Calu3 (cell line): ENCODE measurements at regions of chr16 and their contacts with region 1.

Region 1: DNA sequence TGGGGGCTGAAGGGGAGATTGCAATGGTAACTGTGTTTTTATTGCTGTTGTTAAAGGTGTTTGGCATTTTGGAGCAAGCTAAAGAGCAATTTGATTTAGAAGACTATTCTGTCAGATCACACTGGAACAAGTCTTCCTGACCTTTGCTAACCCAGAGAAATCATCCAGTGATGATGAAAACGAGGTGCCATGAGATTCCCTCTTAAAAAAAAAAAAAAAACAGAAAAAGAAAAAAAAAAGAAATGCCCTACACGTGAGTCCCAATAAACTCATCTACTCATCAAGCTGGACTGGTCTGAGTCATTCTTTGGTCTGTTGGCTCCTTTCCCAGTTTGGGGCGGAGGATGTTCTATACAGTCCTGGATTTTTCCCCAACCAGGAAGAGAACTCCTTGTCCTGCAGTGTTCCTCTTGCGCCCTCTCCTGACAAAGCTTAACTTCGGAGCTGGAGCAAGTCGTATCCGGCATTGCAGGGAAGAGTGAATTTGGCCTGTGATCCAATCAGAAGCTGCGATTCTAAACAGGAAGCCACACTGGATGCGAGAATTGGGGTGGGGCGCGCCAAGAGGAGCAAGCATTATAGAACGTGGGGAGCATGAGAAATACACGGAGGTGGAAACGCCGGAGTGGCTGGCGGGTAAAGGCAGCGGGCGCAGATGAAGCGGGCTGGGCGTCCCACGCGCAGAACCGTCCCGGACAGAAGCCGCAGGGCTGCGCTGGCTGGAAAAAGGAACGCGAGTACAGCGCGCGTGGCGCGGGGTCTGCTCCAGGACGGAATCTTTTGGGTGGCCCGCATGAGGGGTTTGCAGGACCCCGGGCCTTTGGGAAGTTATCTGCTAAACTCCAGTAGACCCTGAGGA is 22.4 kb upstream of the CRYM start:
- DNase-seq: peak; percentile 98
- H3K4me3 Mint-ChIP-seq: peak overlapping the region; percentile 95
- H3K27ac Mint-ChIP-seq: peak overlapping the region; percentile 89
- H3K4me1 Mint-ChIP-seq: peaks cover 21% of the 10 kb centered on the region
- H3K27me3 Mint-ChIP-seq: no peaks in the 10 kb centered on the region
- CTCF ChIP-seq: peak; percentile 74

Region 2: GRCh38 chr16:20806168-20807050 is 494.1 kb before region 1 on chr16 and contains the starts of genes ERI2 and REXO5:
- CTCF ChIA-PET with region 1: interaction called, 11 read pairs
- intact Hi-C with region 1: loop called (anchors 10 kb)
- DNase-seq: peak; percentile 94
- H3K4me3 Mint-ChIP-seq: peak within 1 kb of the TSS; percentile 84
- H3K27ac Mint-ChIP-seq: peak within 1 kb of the TSS; percentile 72
- H3K4me1 Mint-ChIP-seq: peaks cover 18% of the 10 kb centered on the region
- H3K27me3 Mint-ChIP-seq: no peaks in the 10 kb centered on the region
- CTCF ChIP-seq: peak; percentile 56
- total RNA-seq, gene ERI2: 28.7 and 32.6 TPM in 2 replicates
- total RNA-seq, gene REXO5: 10.1 and 10.4 TPM in 2 replicates

Region 3: DNA sequence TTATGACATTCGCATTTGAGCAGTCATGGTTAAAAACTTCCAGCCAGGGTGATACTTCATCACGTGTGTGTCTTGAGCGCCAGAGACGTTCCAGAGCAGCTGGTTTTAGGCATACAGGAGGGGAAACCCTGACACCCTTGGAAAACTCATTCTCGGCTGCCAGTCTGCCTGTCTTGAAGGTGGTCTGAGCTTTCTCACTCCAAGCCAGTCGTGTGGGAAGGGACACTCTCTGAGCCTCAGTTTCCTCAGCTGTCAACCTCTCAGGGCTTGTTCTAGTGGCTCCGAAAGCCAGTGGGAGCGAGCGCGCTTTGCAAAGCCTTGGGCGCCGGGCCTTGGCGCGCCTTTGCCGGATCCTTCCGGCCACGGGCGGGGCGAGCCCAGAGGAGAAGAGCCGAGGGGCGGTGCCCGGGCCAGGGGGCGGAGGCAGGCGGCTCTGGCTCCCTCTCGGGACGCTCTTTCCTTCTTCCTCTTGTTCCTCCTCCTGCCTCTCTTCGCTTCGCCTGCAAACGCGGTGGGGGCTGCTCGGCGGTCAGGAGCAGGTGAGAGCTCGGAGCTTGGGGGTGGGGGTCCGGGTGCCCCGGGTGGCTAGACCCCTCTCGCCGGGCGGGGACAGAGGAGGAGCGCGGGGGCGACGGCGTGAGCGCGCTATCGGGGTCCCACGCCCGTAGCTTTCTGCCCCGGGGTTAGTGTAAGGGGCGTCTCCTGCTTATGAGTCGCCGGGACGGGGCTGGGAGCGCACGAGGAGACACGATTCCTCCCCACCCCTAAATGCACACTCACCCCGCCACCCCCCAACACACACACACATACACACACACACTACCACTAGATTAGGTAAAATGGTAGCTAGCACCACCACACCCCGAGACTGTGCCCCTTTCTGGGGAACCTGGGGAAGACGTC is 142.1 kb before region 1 on chr16 and contains the start of gene LDAF1:
- CTCF ChIA-PET with region 1: interaction called, 83 read pairs
- intact Hi-C with region 1: loop called (anchors 1 kb)
- DNase-seq: peak; percentile 94
- H3K4me3 Mint-ChIP-seq: peak within 1 kb of the TSS; percentile 100
- H3K27ac Mint-ChIP-seq: peak within 1 kb of the TSS; percentile 87
- H3K4me1 Mint-ChIP-seq: peaks cover 42% of the 10 kb centered on the region
- H3K27me3 Mint-ChIP-seq: no peaks in the 10 kb centered on the region
- CTCF ChIP-seq: no peak
- total RNA-seq, gene LDAF1: 46.7 and 50.1 TPM in 2 replicates

Region 4: GRCh38 chr16:21190599-21190998 is 109.9 kb before region 1 on chr16:
- CTCF ChIA-PET with region 1: interaction called, 148 read pairs
- intact Hi-C with region 1: loop called (anchors 1 kb)
- DNase-seq: no peak
- H3K4me3 Mint-ChIP-seq: no peak overlapping the region
- H3K27ac Mint-ChIP-seq: no peak overlapping the region
- H3K4me1 Mint-ChIP-seq: peaks cover 8% of the 10 kb centered on the region
- H3K27me3 Mint-ChIP-seq: peaks cover 15% of the 10 kb centered on the region
- CTCF ChIP-seq: no peak

Region 5: GRCh38 chr16:21568502-21569189 is 268.1 kb after region 1 on chr16:
- CTCF ChIA-PET with region 1: no interaction called
- intact Hi-C with region 1: no loop called
- DNase-seq: no peak
- H3K4me3 Mint-ChIP-seq: no peak overlapping the region
- H3K27ac Mint-ChIP-seq: no peak overlapping the region
- H3K4me1 Mint-ChIP-seq: no peaks in the 10 kb centered on the region
- H3K27me3 Mint-ChIP-seq: no peaks in the 10 kb centered on the region
- CTCF ChIP-seq: no peak

Region 6: GRCh38 chr16:22321339-22322001 is 1020.9 kb after region 1 on chr16:
- CTCF ChIA-PET with region 1: interaction called, 10 read pairs
- intact Hi-C with region 1: loop called (anchors 10 kb)
- DNase-seq: peak; percentile 69
- H3K4me3 Mint-ChIP-seq: no peak overlapping the region
- H3K27ac Mint-ChIP-seq: no peak overlapping the region
- H3K4me1 Mint-ChIP-seq: no peaks in the 10 kb centered on the region
- H3K27me3 Mint-ChIP-seq: no peaks in the 10 kb centered on the region
- CTCF ChIP-seq: peak; percentile 93